H1 (cell line): ENCODE measurements at regions of chr1 and their contacts with region 1.

Region 1: DNA sequence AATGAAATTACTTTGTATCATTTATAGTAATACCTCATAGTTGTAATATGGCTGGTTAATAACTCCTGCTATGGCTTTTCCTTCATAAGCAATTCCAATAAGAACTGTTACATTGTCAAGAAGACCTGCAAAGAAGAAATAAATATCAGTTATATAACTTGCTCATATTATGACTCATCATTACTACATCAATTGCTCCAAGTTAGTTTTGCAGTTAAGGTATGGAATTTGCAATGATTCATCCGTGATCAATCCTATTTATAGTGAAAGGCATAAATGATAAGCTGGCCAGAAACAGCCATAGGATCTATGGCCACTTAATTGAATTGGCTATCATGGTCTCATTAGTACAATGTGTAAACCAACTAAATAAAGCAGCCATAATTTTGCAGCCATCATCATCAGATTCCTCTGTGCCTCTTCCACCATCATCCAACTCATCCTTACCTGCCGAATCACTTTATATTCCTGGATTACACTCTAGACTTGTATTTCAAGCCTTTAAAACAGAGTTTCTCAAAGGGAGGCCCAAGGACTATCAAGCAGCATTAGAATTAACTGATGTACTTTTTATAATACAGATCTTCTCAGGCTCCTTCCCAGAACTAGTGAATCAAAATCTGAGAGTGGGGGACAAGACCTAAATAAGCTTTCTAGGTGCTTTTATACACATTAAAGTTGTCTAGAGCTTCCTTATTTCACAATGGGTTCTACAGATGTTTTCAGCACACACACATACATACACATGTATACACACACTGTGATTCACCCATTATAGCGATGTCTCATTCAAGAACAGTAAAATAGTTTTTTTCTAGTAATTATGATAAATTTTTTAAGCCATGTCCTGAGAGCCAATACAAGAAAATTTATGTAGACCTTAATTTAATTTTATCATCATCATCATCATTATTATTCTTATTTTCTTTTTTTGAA is 21.2 kb upstream of the EPRS1 start:
- DNase-seq: no peak
- H3K4me3 ChIP-seq: no peak overlapping the region
- H3K27ac ChIP-seq: no peak overlapping the region
- H3K4me1 ChIP-seq: no peaks in the 10 kb centered on the region
- H3K27me3 ChIP-seq: no peaks in the 10 kb centered on the region
- CTCF ChIP-seq: no peak
- EP300 ChIP-seq: no peak
- POLR2A ChIP-seq: no peak
- RAD21 ChIP-seq: no peak

Region 2: GRCh38 chr1:220084460-220084859 is 16.9 kb after region 1 on chr1:
- CTCF ChIA-PET with region 1: interaction called, 11 read pairs
- POLR2A ChIA-PET with region 1: no interaction called
- DNase-seq: no peak
- H3K4me3 ChIP-seq: no peak overlapping the region
- H3K27ac ChIP-seq: no peak overlapping the region
- H3K4me1 ChIP-seq: no peaks in the 10 kb centered on the region
- H3K27me3 ChIP-seq: no peaks in the 10 kb centered on the region
- CTCF ChIP-seq: no peak
- EP300 ChIP-seq: no peak
- POLR2A ChIP-seq: no peak
- RAD21 ChIP-seq: no peak

Region 3: DNA sequence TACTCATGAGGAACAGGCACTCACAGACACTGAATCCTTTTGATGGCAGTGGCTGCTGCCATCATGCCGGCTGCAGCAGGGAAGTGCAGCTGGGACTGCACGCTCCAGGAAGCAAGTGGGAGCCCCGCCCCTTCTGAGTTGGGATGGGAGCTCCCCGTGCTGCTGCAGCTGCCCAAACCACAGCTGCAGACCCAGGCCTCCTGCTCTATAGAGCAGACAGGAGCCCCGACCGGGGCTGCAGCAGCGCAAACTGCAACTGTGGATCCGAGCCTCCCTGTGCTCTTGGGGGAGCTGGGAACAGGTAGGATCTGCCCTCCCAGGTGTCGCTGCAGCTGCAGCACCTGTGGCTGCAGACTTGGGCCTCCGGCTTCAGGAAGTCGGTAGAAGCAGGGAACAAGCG is 395.2 kb after region 1 on chr1:
- CTCF ChIA-PET with region 1: no interaction called
- POLR2A ChIA-PET with region 1: no interaction called
- DNase-seq: peak; percentile 44 to 69
- H3K4me3 ChIP-seq: no peak overlapping the region
- H3K27ac ChIP-seq: no peak overlapping the region
- H3K4me1 ChIP-seq: no peaks in the 10 kb centered on the region; a peak in 1 of 7 replicates
- H3K27me3 ChIP-seq: no peaks in the 10 kb centered on the region
- CTCF ChIP-seq: peak in 2 of 3 experiments; percentile 2 to 13; a peak in 2 of 4 replicates
- EP300 ChIP-seq: no peak
- POLR2A ChIP-seq: no peak
- RAD21 ChIP-seq: peak; percentile 24 to 42; a peak in 3 of 4 replicates